Activated CD4-positive, alpha-beta memory T cell treated with anti-CD3 and anti-CD28 coated beads for 36 hours (primary cell): ENCODE measurements at regions of chr10 and their contacts with region 1.

Region 1: GRCh38 chr10:46228563-46229071 is 58.2 kb upstream of the ANTXRL start:
- DNase-seq: peak; percentile 76
- H3K4me3 Mint-ChIP-seq: no peak overlapping the region
- H3K27ac Mint-ChIP-seq: no peak overlapping the region
- H3K4me1 Mint-ChIP-seq: peaks cover 6% of the 10 kb centered on the region
- H3K27me3 Mint-ChIP-seq: no peaks in the 10 kb centered on the region

Region 2: GRCh38 chr10:46035923-46036849 is 192.4 kb before region 1 on chr10:
- CTCF ChIA-PET with region 1: no interaction called
- POLR2A ChIA-PET with region 1: no interaction called
- intact Hi-C with region 1: no loop called
- DNase-seq: no peak
- H3K4me3 Mint-ChIP-seq: no peak overlapping the region
- H3K27ac Mint-ChIP-seq: no peak overlapping the region
- H3K4me1 Mint-ChIP-seq: peaks cover 2% of the 10 kb centered on the region
- H3K27me3 Mint-ChIP-seq: no peaks in the 10 kb centered on the region

Region 3: DNA sequence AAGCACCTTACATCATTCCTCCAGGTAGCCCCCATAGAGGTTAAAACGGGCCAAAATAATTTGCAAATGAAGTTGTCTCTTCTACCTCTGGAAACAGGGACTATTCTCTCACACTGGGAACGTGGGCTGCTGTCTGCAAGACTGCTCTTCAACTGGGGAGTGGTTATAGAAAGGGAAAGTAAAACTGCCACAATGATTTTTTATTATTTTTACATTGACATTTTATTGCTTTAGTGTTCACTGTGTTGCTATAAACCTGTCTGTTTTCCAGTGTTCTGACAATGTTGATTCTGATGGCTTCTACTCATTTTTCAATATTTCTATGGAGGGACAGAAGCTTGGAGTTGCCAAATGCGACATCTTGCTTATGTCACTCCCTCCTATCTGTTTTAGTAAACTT is 57.0 kb before region 1 on chr10:
- CTCF ChIA-PET with region 1: no interaction called
- POLR2A ChIA-PET with region 1: no interaction called
- intact Hi-C with region 1: no loop called
- DNase-seq: no peak
- H3K4me3 Mint-ChIP-seq: no peak overlapping the region
- H3K27ac Mint-ChIP-seq: no peak overlapping the region
- H3K4me1 Mint-ChIP-seq: no peaks in the 10 kb centered on the region
- H3K27me3 Mint-ChIP-seq: no peaks in the 10 kb centered on the region

Region 4: GRCh38 chr10:46311501-46312441 is 83.2 kb after region 1 on chr10:
- CTCF ChIA-PET with region 1: no interaction called
- POLR2A ChIA-PET with region 1: no interaction called
- intact Hi-C with region 1: no loop called
- DNase-seq: no peak
- H3K4me3 Mint-ChIP-seq: no peak overlapping the region
- H3K27ac Mint-ChIP-seq: no peak overlapping the region
- H3K4me1 Mint-ChIP-seq: no peaks in the 10 kb centered on the region
- H3K27me3 Mint-ChIP-seq: no peaks in the 10 kb centered on the region

Region 5: GRCh38 chr10:46325023-46325422 is 96.4 kb after region 1 on chr10:
- CTCF ChIA-PET with region 1: interaction called, 5 read pairs
- POLR2A ChIA-PET with region 1: no interaction called
- intact Hi-C with region 1: loop called (anchors 10 kb)
- DNase-seq: no peak
- H3K4me3 Mint-ChIP-seq: no peak overlapping the region
- H3K27ac Mint-ChIP-seq: no peak overlapping the region
- H3K4me1 Mint-ChIP-seq: no peaks in the 10 kb centered on the region
- H3K27me3 Mint-ChIP-seq: no peaks in the 10 kb centered on the region